CD4-positive, alpha-beta memory T cell (primary cell): ENCODE measurements at regions of chr16 and their contacts with region 1.

Region 1: GRCh38 chr16:3282730-3283524 is at the start of gene ZNF263:
- DNase-seq: peak; percentile 92 to 97 (median 95)
- H3K4me3 ChIP-seq: peak within 1 kb of the TSS; percentile 66 to 68
- H3K4me3 Mint-ChIP-seq: peak within 1 kb of the TSS; percentile 93 to 97 (median 95)
- H3K27ac ChIP-seq: peak within 1 kb of the TSS; percentile 87
- H3K27ac Mint-ChIP-seq: peak within 1 kb of the TSS; percentile 93 to 99 (median 98)
- H3K4me1 ChIP-seq: peaks cover 27% of the 10 kb centered on the region
- H3K4me1 Mint-ChIP-seq: peaks cover 18 to 45% (median 30%) of the 10 kb centered on the region in 4 donors
- H3K27me3 ChIP-seq: no peaks in the 10 kb centered on the region
- H3K27me3 Mint-ChIP-seq: no peaks in the 10 kb centered on the region
- total RNA-seq, gene ZNF263: 44.0 to 45.1 TPM

Region 2: DNA sequence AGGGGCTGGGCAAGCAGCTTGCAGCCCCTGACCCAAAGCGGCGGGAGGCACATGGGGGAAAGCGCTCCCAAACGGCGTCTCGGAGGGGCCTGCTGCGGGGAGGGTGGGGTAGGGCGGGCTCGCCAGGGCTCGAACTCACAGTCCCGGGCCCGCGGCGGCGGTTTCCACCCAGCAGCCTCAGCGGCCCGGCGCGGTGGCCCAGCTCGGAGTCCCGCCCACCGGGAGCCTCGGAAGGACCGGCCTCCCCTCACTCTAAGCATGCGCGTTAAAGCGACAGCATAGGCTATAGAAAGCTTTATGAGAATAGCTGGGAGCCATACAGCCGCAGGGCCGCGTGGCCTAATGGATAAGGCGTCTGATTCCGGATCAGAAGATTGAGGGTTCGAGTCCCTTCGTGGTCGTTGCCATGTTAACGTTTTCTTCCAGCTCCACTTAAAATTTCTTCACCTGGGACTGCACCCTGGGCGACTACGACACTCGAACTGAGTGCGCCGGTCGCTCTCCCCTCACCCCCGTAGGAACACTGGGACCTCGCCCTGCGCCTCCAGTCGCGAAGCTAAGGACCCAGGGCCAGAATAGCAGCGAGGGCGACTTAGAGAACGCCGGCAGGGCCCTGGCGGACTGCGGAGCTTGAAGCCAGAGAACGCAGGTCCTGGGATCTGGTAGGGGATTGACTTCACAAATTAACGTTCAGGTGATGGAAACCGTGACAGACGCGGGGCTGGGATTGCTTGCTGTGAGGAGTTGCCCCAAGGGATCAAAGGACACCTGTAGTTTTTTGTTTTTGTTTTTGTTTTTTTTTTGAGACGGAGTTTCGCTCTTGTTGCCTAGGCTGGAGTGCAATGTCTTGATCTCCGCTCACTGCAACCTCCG is 132.3 kb before region 1 on chr16:
- CTCF ChIA-PET with region 1: no interaction called
- POLR2A ChIA-PET with region 1: interaction called, 12 read pairs
- intact Hi-C with region 1: loop called (anchors 1 kb)
- DNase-seq: peak; percentile 96 to 99 (median 97)
- H3K4me3 ChIP-seq: peak overlapping the region; percentile 77 to 92
- H3K4me3 Mint-ChIP-seq: peak overlapping the region; percentile 87 to 96 (median 91)
- H3K27ac ChIP-seq: peak overlapping the region; percentile 64
- H3K27ac Mint-ChIP-seq: peak overlapping the region; percentile 87 to 100 (median 95)
- H3K4me1 ChIP-seq: peaks cover 27% of the 10 kb centered on the region
- H3K4me1 Mint-ChIP-seq: peaks cover 22 to 47% (median 26%) of the 10 kb centered on the region in 4 donors
- H3K27me3 ChIP-seq: no peaks in the 10 kb centered on the region
- H3K27me3 Mint-ChIP-seq: peaks cover 3 to 8% of the 10 kb centered on the region in 2 donors

Region 3: GRCh38 chr16:3182608-3183444 is 100.1 kb before region 1 on chr16:
- CTCF ChIA-PET with region 1: interaction called, 7 read pairs
- POLR2A ChIA-PET with region 1: interaction called, 11 read pairs
- intact Hi-C with region 1: loop called (anchors 5 kb)
- DNase-seq: peak in 3 of 5 donors; percentile 35 to 54 (median 45)
- H3K4me3 ChIP-seq: peak overlapping the region in 1 of 2 donors; percentile 45
- H3K4me3 Mint-ChIP-seq: peak overlapping the region; percentile 59 to 86 (median 73)
- H3K27ac ChIP-seq: no peak overlapping the region
- H3K27ac Mint-ChIP-seq: peak overlapping the region in 5 of 7 donors; percentile 37 to 89 (median 80)
- H3K4me1 ChIP-seq: peaks cover 23% of the 10 kb centered on the region
- H3K4me1 Mint-ChIP-seq: peaks cover 16 to 35% (median 21%) of the 10 kb centered on the region in 4 donors
- H3K27me3 ChIP-seq: peaks cover 52% of the 10 kb centered on the region
- H3K27me3 Mint-ChIP-seq: peaks cover 55 to 66% of the 10 kb centered on the region in 2 donors

Region 4: GRCh38 chr16:3234543-3235541 is 48.1 kb before region 1 on chr16 and contains the start of gene ZNF200:
- CTCF ChIA-PET with region 1: no interaction called
- POLR2A ChIA-PET with region 1: interaction called, 30 read pairs
- intact Hi-C with region 1: loop called (anchors 1 kb)
- DNase-seq: peak; percentile 92 to 96 (median 95)
- H3K4me3 ChIP-seq: peak within 1 kb of the TSS; percentile 91 to 94
- H3K4me3 Mint-ChIP-seq: peak within 1 kb of the TSS; percentile 93 to 98 (median 96)
- H3K27ac ChIP-seq: peak within 1 kb of the TSS; percentile 88
- H3K27ac Mint-ChIP-seq: peak within 1 kb of the TSS; percentile 96 to 99 (median 98)
- H3K4me1 ChIP-seq: peaks cover 29% of the 10 kb centered on the region
- H3K4me1 Mint-ChIP-seq: peaks cover 17 to 41% (median 23%) of the 10 kb centered on the region in 4 donors
- H3K27me3 ChIP-seq: no peaks in the 10 kb centered on the region
- H3K27me3 Mint-ChIP-seq: no peaks in the 10 kb centered on the region
- total RNA-seq, gene ZNF200: 27.7 to 29.2 TPM

Region 5: GRCh38 chr16:3305109-3306068 is 22.5 kb after region 1 on chr16 and contains the starts of genes TIGD7 and ZNF75A:
- CTCF ChIA-PET with region 1: interaction called, 3 read pairs
- POLR2A ChIA-PET with region 1: interaction called, 76 read pairs
- intact Hi-C with region 1: loop called (anchors 1 kb)
- DNase-seq: peak; percentile 82 to 93 (median 85)
- H3K4me3 ChIP-seq: peak within 1 kb of the TSS; percentile 80 to 88
- H3K4me3 Mint-ChIP-seq: peak within 1 kb of the TSS; percentile 79 to 87 (median 85)
- H3K27ac ChIP-seq: peak within 1 kb of the TSS; percentile 70
- H3K27ac Mint-ChIP-seq: peak within 1 kb of the TSS; percentile 64 to 84 (median 82)
- H3K4me1 ChIP-seq: peaks cover 16% of the 10 kb centered on the region
- H3K4me1 Mint-ChIP-seq: peaks cover 7 to 13% (median 11%) of the 10 kb centered on the region in 4 donors
- H3K27me3 ChIP-seq: no peaks in the 10 kb centered on the region
- H3K27me3 Mint-ChIP-seq: no peaks in the 10 kb centered on the region
- total RNA-seq, gene TIGD7: 14.2 to 19.0 TPM
- total RNA-seq, gene ZNF75A: 82.7 to 88.1 TPM

Region 6: DNA sequence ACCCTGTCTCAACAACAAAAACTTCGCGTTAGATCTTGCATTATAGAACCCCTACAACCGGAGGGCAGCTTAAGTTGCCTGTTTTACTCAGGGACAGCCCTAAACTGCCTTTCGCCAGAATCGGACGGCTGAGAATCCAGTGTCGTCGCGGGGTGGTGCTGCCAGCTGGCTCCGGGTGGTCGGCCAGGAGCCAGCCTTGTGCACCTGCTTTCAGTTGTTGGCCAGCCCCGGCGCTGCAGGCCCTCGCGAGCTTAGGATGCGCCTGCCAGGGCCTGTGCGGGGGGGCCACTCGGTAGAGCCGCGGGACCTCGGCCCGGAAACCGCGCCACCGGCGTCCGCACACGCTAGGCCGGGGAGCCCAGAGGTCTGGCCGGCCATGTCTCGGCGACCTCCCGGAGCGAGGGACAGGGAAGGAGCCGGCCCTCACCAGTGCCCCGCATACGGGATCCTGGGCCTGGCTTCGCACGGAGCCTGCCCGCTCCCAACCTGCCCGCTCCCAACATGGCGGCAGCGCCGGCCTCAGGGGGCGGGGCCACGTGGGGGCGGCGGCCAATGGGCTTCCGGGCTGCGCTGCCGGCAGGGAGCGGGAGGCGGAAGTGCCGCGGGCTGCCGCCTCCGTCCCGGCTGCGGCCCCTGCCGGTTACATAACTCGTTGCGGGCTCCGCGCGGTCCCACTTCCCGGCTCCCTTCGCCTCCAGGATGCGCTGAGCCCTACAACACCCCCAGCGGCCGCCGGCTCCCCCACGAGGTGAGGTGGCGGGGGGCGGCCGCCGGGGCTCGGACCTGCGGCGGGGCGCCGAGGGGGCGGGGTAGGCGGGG is 174.7 kb after region 1 on chr16:
- CTCF ChIA-PET with region 1: no interaction called
- POLR2A ChIA-PET with region 1: interaction called, 19 read pairs
- intact Hi-C with region 1: loop called (anchors 1 kb)
- DNase-seq: peak; percentile 90 to 95 (median 92)
- H3K4me3 ChIP-seq: peak overlapping the region; percentile 73 to 94
- H3K4me3 Mint-ChIP-seq: peak overlapping the region; percentile 79 to 89 (median 84)
- H3K27ac ChIP-seq: peak overlapping the region; percentile 88
- H3K27ac Mint-ChIP-seq: peak overlapping the region; percentile 83 to 93 (median 92)
- H3K4me1 ChIP-seq: peaks cover 48% of the 10 kb centered on the region
- H3K4me1 Mint-ChIP-seq: peaks cover 29 to 57% (median 46%) of the 10 kb centered on the region in 4 donors
- H3K27me3 ChIP-seq: no peaks in the 10 kb centered on the region
- H3K27me3 Mint-ChIP-seq: no peaks in the 10 kb centered on the region